ENCODE measurements at regions of chr19 and their contacts with region 1.

Region 1: GRCh38 chr19:17947815-17948513 is 15.1 kb downstream of the CCDC124 start:
- DNase-seq: peak; percentile 99
- ATAC-seq: peak; percentile 73
- H3K4me3 Mint-ChIP-seq: peak overlapping the region; percentile 79
- H3K27ac Mint-ChIP-seq: no peak overlapping the region
- H3K4me1 Mint-ChIP-seq: peaks cover 31% of the 10 kb centered on the region
- H3K27me3 Mint-ChIP-seq: peaks cover 40% of the 10 kb centered on the region

Region 2: DNA sequence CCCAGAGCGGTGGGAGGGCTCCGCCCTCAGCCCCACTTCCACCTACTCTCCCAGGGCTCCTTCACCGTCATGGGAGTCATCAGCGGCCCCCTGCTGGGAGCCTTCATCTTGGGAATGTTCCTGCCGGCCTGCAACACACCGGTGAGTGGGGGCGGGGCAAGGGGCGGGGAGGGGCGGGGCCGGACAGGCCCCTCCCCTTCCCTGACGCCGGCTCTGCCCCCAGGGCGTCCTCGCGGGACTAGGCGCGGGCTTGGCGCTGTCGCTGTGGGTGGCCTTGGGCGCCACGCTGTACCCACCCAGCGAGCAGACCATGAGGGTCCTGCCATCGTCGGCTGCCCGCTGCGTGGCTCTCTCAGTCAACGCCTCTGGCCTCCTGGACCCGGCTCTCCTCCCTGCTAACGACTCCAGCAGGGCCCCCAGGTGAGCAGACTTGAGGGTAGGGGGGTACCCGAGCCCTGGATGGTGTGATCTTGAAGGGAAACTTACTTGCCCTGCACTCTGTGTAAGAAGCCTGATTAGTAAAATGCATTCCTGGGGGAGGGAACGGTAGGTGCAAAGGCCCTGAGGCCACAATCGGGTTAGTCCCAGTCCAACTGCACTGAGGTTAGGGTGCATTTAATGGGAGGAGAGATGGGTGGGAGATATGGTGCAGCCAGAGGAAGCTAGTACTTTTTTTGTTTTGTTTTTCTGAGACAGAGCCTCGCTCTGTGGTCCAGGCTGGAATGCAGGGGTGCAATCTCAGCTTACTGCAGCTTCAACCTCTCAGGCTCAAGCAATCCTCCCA is 64.1 kb before region 1 on chr19:
- POLR2A ChIA-PET with region 1: no interaction called
- DNase-seq: no peak
- ATAC-seq: no peak
- H3K4me3 Mint-ChIP-seq: no peak overlapping the region
- H3K27ac Mint-ChIP-seq: no peak overlapping the region
- H3K4me1 Mint-ChIP-seq: peaks cover 1% of the 10 kb centered on the region
- H3K27me3 Mint-ChIP-seq: no peaks in the 10 kb centered on the region

Region 3: DNA sequence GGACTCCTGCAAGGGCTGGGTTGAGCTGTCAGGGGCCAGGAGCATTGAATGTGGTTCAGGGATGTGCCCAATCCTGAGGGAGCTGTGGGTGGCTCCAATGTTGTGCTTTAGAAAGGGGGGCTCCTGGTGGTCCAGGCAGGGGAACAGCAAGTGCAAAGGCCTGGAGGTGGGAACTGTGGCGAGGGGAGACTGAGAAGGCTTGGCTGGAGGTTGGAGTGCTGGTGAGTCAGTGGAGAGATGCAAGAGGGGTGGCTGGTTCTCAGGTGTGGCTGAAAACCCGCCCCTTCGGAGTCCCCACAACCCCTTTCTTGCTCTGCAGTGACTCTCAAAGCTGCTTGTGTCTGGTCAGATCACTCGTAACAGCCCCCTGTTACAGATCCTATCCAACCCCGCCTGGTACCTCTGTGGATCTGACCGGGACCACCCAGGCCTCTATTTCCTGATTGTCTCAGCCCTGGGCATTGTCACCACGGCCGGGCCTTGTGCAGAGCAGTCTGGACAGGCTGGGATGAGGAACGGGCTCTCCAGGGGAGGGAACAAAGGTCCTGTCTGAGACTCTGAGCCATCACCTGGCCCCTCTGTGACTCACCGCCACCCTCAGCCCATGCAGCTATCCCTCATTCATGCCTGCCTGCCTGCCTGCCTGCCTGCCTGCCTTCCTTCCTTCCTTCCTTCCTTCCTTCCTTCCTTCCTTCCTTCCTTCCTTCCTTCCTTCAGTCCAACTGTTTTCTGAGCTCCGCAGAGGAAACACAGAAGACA is 17.6 kb after region 1 on chr19:
- POLR2A ChIA-PET with region 1: no interaction called
- DNase-seq: no peak
- ATAC-seq: no peak
- H3K4me3 Mint-ChIP-seq: no peak overlapping the region
- H3K27ac Mint-ChIP-seq: no peak overlapping the region
- H3K4me1 Mint-ChIP-seq: peaks cover 5% of the 10 kb centered on the region
- H3K27me3 Mint-ChIP-seq: peaks cover 49% of the 10 kb centered on the region

Region 4: DNA sequence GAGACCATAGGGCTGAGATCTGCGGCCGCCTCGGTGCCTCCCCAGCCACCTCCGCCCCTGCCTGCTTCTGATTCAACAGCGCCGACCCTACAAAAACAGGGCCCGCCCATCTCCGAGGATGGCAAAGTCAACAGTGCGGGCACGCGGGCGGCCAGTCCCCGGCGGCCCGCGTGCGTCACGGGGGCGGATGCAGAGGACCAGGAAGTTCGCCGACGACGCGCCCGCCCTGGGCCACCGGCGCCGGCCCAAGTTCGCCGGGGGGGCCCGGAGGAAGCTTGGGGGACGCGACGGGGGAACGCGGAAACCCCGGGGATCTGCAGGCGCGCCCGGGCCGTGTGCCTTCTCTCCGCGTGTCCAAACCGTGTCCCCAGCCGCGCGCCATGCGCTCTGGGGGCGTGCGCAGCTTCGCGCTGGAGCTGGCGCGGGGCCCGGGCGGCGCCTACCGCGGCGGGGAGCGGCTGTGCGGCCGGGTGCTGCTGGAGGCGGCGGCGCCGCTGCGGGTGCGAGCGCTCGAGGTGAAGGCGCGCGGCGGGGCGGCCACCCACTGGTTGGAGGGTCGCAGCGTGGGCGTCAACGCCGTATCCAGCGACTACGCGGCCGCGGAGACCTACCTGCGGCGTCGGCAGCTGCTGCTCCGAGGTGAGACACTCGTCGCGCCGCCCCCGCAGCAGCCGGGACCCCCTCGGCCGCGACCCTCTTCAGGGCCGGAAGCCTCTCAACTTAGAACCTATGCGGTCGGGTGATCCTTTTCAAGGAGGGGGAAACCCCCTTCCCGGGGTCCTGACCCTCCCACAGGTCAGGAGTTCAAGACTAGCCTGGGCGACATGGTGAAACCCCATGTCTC is 53.2 kb after region 1 on chr19:
- POLR2A ChIA-PET with region 1: interaction called, 13 read pairs
- DNase-seq: peak; percentile 90
- ATAC-seq: peak; percentile 82
- H3K4me3 Mint-ChIP-seq: peak overlapping the region; percentile 93
- H3K27ac Mint-ChIP-seq: peak overlapping the region; percentile 100
- H3K4me1 Mint-ChIP-seq: peaks cover 9% of the 10 kb centered on the region
- H3K27me3 Mint-ChIP-seq: peaks cover 2% of the 10 kb centered on the region

Region 5: DNA sequence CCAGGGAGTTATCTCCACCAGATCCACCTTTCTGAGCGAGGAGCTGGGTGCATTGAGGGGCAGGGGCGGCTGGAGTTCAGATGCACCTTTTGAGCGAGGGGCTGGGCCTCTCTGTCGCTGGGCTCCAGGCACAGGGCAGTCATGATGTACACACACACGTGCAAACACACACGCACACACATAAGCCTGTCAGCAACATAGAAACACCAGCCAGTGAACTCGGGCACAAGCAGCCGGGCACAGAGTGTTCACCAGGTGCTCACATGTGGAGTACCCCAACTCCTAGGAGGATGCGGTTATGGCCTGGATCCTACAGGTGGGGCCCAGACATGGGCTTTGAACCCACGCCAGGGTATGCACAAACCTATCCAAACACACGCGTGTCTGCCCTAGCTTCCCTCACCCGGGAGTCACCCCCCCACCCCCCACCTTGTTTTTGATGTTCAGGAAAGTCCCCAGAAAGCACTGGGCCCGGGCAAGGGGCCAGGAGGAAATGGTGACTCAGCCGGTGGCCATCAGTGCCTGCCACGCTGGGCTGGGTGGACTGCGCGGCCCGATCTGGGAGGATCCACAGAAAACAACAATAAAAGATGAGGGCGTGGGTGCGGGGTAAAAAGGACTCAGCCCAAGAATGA is 73.3 kb after region 1 on chr19:
- POLR2A ChIA-PET with region 1: no interaction called
- DNase-seq: peak; percentile 48
- ATAC-seq: no peak
- H3K4me3 Mint-ChIP-seq: peak overlapping the region; percentile 89
- H3K27ac Mint-ChIP-seq: peak overlapping the region; percentile 98
- H3K4me1 Mint-ChIP-seq: peaks cover 49% of the 10 kb centered on the region
- H3K27me3 Mint-ChIP-seq: peaks cover 1% of the 10 kb centered on the region

Measured in activated naive CD8-positive, alpha-beta T cell treated with anti-CD3 and anti-CD28 coated beads, Interleukin-2, amount 10 ng/mL, durations not matched to agents 7 days and 5 days (primary cell).